Upper lobe of right lung (tissue), 1 donor: ENCODE measurements at regions of chr1 and their contacts with region 1.

Region 1: DNA sequence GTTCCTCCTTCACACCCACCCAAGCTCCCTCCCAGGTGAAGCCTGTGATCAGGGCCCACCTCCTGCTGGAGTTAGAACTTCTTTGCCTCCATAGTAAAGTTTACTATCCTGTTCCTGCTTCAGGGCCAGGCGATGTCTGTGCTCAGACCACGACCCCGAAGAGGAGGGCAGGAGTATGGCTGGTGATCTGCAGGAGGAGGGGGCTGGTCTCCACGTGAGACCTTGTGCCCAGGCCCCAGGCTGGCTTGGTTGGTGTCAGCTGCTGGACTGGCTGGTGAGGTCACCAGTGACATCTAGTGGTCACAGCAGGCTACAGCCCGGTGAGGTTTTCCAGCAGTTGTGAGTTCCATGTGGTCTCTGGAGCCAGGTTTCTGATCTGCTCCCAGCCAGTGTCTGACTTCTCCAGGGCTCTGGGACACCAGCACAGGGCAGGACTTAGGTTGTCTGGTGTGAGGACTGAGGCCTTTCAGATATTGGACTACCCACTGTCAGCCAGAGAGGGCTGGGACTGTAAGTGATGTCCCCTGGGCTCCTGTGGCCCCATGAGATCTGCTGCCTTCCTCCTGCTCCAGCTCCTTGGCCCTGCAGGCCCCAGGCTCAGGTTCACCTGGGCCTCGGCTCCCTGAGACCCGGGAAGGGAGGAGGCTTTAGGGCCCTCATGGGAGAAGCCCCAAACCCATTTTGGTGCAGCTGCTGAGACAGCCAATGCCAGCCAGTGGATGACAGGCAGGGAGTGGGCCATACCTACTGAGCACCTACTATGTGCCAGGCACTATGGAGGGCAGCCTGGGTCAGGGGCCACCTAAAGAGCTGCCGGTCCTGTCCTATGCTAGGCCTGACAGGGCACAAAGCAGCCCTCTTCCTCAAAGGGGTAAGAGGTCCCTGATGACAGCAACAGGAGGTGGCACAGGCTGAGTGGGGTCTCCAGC is 6.0 kb upstream of the UBL4B start:
- DNase-seq: peak; percentile 73
- ATAC-seq: peak; percentile 91
- H3K4me3 ChIP-seq: no peak overlapping the region
- H3K27ac ChIP-seq: no peak overlapping the region
- H3K4me1 ChIP-seq: no peaks in the 10 kb centered on the region
- H3K27me3 ChIP-seq: no peaks in the 10 kb centered on the region
- CTCF ChIP-seq: peak; percentile 92

Region 2: DNA sequence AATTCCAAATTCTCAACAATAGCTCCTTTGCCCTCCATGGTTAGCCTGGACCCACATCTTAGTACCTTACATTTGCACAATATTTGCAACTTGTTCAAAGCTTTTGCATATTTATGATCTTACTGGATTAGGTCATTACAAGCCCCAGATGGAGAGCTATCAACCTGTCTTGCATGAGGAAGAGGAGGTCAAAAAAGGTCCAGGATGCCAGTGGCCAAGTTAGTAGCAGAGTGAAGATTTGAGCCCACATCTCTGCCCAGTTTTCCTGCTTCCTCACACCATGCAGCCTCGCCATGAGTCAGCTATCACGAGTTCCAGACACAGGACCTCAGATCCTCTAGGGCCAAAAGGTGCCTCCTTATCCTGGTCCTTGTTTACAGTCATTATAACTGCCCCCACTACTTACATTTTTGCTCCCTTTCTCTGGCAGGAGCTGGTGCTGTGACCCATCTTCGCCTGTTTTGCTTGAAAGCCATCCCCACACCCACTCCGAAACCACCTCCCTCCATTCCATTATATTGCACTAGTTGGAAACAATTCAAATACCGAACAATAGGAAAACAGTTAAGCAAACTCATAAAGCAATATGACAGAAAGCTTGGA is 126.7 kb before region 1 on chr1:
- intact Hi-C with region 1: no loop called
- DNase-seq: no peak
- ATAC-seq: no peak
- H3K4me3 ChIP-seq: no peak overlapping the region
- H3K27ac ChIP-seq: peak overlapping the region; percentile 47
- H3K4me1 ChIP-seq: peaks cover 46% of the 10 kb centered on the region
- H3K27me3 ChIP-seq: no peaks in the 10 kb centered on the region
- CTCF ChIP-seq: no peak

Region 3: DNA sequence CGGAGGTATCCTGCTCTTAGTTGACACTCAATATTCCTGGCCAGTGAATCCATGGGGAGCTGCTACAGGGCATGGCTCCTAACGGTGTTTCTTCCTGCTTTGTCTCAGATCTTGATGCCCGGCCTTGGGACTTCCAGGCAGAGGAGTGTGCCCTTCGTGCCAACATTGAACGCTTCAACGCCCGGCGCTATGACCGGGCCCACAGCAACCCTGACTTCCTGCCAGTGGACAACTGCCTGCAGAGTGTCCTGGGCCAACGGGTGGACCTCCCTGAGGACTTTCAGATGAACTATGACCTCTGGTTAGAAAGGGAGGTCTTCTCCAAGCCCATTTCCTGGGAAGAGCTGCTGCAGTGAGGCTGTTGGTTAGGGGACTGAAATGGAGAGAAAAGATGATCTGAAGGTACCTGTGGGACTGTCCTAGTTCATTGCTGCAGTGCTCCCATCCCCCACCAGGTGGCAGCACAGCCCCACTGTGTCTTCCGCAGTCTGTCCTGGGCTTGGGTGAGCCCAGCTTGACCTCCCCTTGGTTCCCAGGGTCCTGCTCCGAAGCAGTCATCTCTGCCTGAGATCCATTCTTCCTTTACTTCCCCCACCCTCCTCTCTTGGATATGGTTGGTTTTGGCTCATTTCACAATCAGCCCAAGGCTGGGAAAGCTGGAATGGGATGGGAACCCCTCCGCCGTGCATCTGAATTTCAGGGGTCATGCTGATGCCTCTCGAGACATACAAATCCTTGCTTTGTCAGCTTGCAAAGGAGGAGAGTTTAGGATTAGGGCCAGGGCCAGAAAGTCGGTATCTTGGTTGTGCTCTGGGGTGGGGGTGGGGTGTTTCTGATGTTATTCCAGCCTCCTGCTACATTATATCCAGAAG is 52.5 kb before region 1 on chr1:
- intact Hi-C with region 1: loop called (anchors 10 kb)
- DNase-seq: peak; percentile 78
- ATAC-seq: peak; percentile 75
- H3K4me3 ChIP-seq: no peak overlapping the region
- H3K27ac ChIP-seq: no peak overlapping the region
- H3K4me1 ChIP-seq: peaks cover 8% of the 10 kb centered on the region
- H3K27me3 ChIP-seq: no peaks in the 10 kb centered on the region
- CTCF ChIP-seq: peak; percentile 96

Region 4: DNA sequence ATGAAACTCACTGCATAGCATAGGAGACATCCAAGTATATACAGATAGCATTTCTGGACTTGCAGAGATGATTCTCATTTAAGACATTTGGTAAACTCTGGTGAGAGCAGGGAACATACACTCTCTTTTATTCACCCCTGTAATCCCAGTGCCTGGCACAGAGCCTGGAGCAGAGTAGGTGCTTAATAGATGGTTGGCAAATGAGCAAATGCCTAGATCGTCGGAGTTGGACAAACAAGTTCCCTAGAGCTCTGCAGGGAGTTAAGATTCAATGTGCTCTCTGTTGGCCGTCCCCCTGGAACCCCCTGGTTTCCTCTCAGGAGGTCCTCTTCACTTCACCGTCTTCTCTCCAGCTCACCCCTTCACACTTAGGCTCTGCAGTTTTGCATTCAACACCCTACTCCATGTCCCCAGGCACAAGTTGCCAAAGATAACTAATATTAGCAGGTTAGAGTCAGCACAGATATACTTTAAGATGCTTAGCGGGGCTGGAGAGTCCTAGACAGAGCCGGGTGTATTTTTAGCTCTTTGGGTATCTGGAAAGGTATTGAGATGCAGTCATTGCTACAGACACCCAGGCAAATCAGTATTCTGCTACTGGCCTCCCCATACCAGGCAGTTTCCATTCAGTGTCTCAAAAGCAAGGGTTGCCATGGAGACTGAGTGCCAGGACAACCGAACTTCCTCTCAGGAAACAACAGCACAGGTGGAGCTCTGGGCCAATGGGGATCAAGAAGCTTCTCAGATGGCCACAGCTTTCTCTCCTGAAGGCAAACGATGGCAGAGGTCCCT is 148.9 kb after region 1 on chr1:
- intact Hi-C with region 1: no loop called
- DNase-seq: no peak
- ATAC-seq: no peak
- H3K4me3 ChIP-seq: no peak overlapping the region
- H3K27ac ChIP-seq: no peak overlapping the region
- H3K4me1 ChIP-seq: no peaks in the 10 kb centered on the region
- H3K27me3 ChIP-seq: no peaks in the 10 kb centered on the region
- CTCF ChIP-seq: no peak